ENCODE measurements at regions of chr10 and their contacts with region 1.

Region 1: DNA sequence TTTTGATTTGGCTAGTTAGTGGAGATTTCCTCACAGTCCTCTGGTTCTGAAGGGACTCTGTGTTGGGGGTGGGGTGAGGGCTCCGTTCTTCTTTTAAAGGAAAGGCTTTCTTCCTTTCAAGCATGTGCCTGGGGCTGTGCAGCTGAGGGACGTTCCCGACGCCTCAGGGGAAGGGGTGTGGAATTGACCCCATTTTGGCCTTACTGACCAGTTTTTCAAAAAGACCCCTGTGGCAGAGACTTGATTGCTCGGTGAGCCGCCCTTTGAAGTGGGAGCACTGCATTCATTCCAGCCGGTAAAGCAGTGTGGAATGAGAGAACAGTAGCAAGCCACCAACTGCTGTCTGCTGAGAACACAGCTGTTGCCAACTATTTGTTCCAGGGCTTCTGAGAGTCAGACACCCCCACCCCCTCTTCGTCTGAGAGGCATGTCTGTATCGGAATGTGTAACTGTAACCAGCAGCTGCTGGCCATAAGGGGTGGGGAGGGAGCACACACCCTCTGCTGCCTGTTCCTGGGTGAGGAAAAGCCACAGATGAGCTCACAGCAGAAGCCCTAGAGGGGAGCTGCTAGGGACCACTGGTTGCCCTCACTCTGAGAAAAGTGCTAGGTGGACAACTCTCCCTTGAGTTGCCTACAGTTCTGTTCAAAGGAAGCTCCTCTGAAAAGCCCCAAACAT is 33.2 kb downstream of the WBP1L start:
- DNase-seq: peak; percentile 78 to 94 (median 89)
- ATAC-seq: peak; percentile 81 to 86 (median 83)
- H3K4me3 ChIP-seq: peak overlapping the region; percentile 21 to 72 (median 60)
- H3K27ac ChIP-seq: peak overlapping the region; percentile 86 to 99 (median 96)
- H3K4me1 ChIP-seq: peaks cover 11 to 100% (median 84%) of the 10 kb centered on the region in 12 donors
- H3K27me3 ChIP-seq: no peaks in the 10 kb centered on the region
- CTCF ChIP-seq: no peak
- POLR2A ChIP-seq: peak in 1 of 2 donors; percentile 54

Region 2: GRCh38 chr10:102796407-102797176 is 19.7 kb after region 1 on chr10:
- intact Hi-C with region 1: loop called in 3 of 10 experiments (anchors 1 kb)
- DNase-seq: peak; percentile 90 to 96 (median 92)
- ATAC-seq: peak; percentile 96 to 97 (median 96)
- H3K4me3 ChIP-seq: peak overlapping the region in 9 of 12 donors; percentile 4 to 34 (median 18)
- H3K27ac ChIP-seq: peak overlapping the region; percentile 75 to 93 (median 84)
- H3K4me1 ChIP-seq: peaks cover 20 to 99% (median 83%) of the 10 kb centered on the region in 12 donors
- H3K27me3 ChIP-seq: no peaks in the 10 kb centered on the region
- CTCF ChIP-seq: no peak
- POLR2A ChIP-seq: peak in 1 of 2 donors; percentile 63

Region 3: GRCh38 chr10:102815790-102816549 is 39.1 kb after region 1 on chr10:
- intact Hi-C with region 1: loop called in 4 of 10 experiments (anchors 2 to 5 kb)
- DNase-seq: peak in 4 of 5 donors; percentile 63 to 73 (median 69)
- ATAC-seq: peak; percentile 59 to 77 (median 74)
- H3K4me3 ChIP-seq: peak overlapping the region in 4 of 12 donors; percentile 1 to 20 (median 9)
- H3K27ac ChIP-seq: peak overlapping the region; percentile 81 to 98 (median 88)
- H3K4me1 ChIP-seq: peaks cover 6 to 80% (median 42%) of the 10 kb centered on the region in 12 donors
- H3K27me3 ChIP-seq: no peaks in the 10 kb centered on the region
- CTCF ChIP-seq: no peak
- POLR2A ChIP-seq: peak in 1 of 2 donors; percentile 14